HepG2 (cell line): ENCODE measurements at regions of chr17 and their contacts with region 1.

Region 1: DNA sequence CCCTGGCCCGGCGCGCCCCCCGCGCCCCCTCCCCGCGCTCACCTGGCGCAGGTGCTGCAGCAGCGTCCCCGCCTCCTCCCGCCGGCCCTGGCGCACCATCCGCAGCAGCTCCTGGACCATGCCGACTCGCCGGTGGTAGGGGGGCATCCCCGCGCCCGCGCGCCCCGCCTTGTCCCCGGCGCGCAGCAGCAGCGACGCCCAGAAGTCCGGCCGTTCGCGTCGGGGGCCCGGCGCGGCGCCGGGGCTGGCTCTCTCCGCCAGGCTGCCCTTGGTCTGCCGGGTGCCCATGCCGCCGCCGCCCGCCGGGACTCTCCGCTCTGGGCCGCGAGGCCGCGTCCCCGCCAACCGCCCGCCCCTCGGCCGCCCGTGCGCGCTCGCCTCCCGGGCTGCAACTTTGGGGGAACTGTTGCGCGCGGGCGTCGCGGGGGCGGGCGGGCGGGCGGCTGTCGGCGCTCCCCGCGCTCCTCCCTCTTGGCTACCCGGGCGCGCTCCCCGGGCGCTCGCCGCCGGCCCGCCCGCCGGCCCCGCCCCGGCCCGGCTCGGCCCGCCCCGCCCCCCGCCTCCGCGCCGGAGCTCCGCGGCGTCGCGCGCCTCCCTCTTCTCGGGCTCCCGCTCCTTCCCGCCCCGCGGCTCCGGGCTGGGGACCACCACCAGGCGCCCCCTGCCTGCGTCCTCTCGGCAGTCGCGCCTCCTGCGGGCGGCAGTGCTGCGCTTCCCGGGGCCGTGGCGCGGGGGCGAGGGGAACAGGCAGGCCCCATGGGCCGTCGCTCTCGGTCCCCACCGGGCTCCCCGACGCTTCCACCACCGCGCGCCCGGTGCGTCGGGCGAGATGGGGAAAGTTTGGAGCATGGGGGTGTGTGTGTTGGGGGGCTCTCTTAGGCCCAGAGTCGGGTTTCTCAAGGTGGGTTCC is at the start of gene LRRC75A:
- DNase-seq: no peak
- ATAC-seq: peak; percentile 39
- H3K4me3 ChIP-seq: peak within 1 kb of the TSS; percentile 34 to 67 (median 44); a peak in 4 of 6 replicates
- H3K27ac ChIP-seq: no peak within 1 kb of the TSS
- H3K4me1 ChIP-seq: peaks cover 25% of the 10 kb centered on the region
- H3K27me3 ChIP-seq: peaks cover 19 to 70% of the 10 kb centered on the region in 2 experiments; a peak in 3 of 5 replicates
- CTCF ChIP-seq: peak; percentile 34; the same call in 1 of the 2 replicates
- EP300 ChIP-seq: no peak
- POLR2A ChIP-seq: no peak
- RAD21 ChIP-seq: no peak
- total RNA-seq, gene LRRC75A: 0.06 TPM in 1 of 2 replicates, not detected in the other

Region 2: GRCh38 chr17:16456742-16457316 is 35.1 kb before region 1 on chr17:
- CTCF ChIA-PET with region 1: no interaction called
- POLR2A ChIA-PET with region 1: no interaction called
- in situ Hi-C with region 1: no loop called
- intact Hi-C with region 1: loop called (anchors 5 kb)
- DNase-seq: no peak
- ATAC-seq: 0 out of 3 replicates have a peak, but pooled peaks have one; percentile 5
- H3K4me3 ChIP-seq: no peak overlapping the region
- H3K27ac ChIP-seq: no peak overlapping the region
- H3K4me1 ChIP-seq: peaks cover 31% of the 10 kb centered on the region
- H3K27me3 ChIP-seq: no peaks in the 10 kb centered on the region
- CTCF ChIP-seq: peak; percentile 48; the same call in 1 of the 2 replicates
- EP300 ChIP-seq: no peak
- POLR2A ChIP-seq: no peak
- RAD21 ChIP-seq: no peak

Region 3: DNA sequence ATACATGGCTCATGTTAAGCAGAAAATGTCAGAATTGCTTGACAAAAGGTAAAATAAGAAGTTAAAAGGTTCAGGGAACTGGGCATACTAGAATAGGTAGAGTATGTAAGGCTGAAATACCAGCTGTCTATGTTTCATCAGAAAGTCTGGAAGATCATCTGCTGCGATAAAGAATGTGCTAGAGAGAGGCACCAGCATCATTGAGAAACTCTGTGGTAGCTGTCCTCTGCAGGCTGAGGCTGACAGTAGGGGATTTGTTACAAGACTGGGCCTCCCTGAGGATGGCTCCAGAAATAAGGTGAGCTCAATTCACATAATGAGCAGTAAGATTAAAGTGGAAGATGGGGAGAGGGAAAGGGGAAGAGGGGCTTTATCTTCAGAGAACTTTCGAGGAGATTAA is 81.5 kb after region 1 on chr17:
- CTCF ChIA-PET with region 1: no interaction called
- POLR2A ChIA-PET with region 1: no interaction called
- in situ Hi-C with region 1: no loop called
- intact Hi-C with region 1: no loop called
- DNase-seq: no peak
- ATAC-seq: no peak
- H3K4me3 ChIP-seq: no peak overlapping the region
- H3K27ac ChIP-seq: no peak overlapping the region
- H3K4me1 ChIP-seq: no peaks in the 10 kb centered on the region
- H3K27me3 ChIP-seq: peaks cover 0 to 10% of the 10 kb centered on the region in 2 experiments; a peak in 1 of 5 replicates
- CTCF ChIP-seq: no peak
- EP300 ChIP-seq: no peak
- POLR2A ChIP-seq: no peak
- RAD21 ChIP-seq: no peak